Activated T-helper 2 cell treated with anti-CD3 and anti-CD28 coated beads, Interferon-gamma antibody, Interleukin-2, Interleukin-4, amounts not matched to agents 10 μg/mL and 5 μg/mL and 100 μg/mL, durations not matched to agents 14 hours and 24 hours and 36 hours (primary cell): ENCODE measurements at regions of chr4 and their contacts with region 1.

Region 1: GRCh38 chr4:95549246-95550114 is 707 bp upstream of the UNC5C start:
- DNase-seq: peak; percentile 45
- H3K4me3 Mint-ChIP-seq: peak overlapping the region; percentile 89
- H3K27ac Mint-ChIP-seq: no peak overlapping the region
- H3K4me1 Mint-ChIP-seq: peaks cover 26% of the 10 kb centered on the region
- H3K27me3 Mint-ChIP-seq: peaks cover 59% of the 10 kb centered on the region

Region 2: GRCh38 chr4:95599777-95600400 is 50.4 kb after region 1 on chr4:
- intact Hi-C with region 1: loop called (anchors 2 kb)
- DNase-seq: no peak
- H3K4me3 Mint-ChIP-seq: peak overlapping the region; percentile 9
- H3K27ac Mint-ChIP-seq: no peak overlapping the region
- H3K4me1 Mint-ChIP-seq: peaks cover 17% of the 10 kb centered on the region
- H3K27me3 Mint-ChIP-seq: peaks cover 23% of the 10 kb centered on the region

Region 3: GRCh38 chr4:95610061-95610569 is 60.6 kb after region 1 on chr4:
- intact Hi-C with region 1: no loop called
- DNase-seq: no peak
- H3K4me3 Mint-ChIP-seq: no peak overlapping the region
- H3K27ac Mint-ChIP-seq: no peak overlapping the region
- H3K4me1 Mint-ChIP-seq: peaks cover 3% of the 10 kb centered on the region
- H3K27me3 Mint-ChIP-seq: peaks cover 7% of the 10 kb centered on the region